ENCODE measurements at regions of chr14 and their contacts with region 1.

Region 1: GRCh38 chr14:105351920-105352851 is 37.6 kb downstream of the PACS2 start:
- DNase-seq: peak; percentile 73
- ATAC-seq: peak; percentile 94
- H3K4me3 ChIP-seq: no peak overlapping the region
- H3K27ac ChIP-seq: peak overlapping the region; percentile 29
- H3K4me1 ChIP-seq: peaks cover 8 to 12% of the 10 kb centered on the region in 2 experiments; a peak in 2 of 4 replicates
- H3K27me3 ChIP-seq: no peaks in the 10 kb centered on the region
- CTCF ChIP-seq: peak; percentile 85 to 90 (median 89)
- POLR2A ChIP-seq: no peak
- RAD21 ChIP-seq: peak; percentile 97

Region 2: DNA sequence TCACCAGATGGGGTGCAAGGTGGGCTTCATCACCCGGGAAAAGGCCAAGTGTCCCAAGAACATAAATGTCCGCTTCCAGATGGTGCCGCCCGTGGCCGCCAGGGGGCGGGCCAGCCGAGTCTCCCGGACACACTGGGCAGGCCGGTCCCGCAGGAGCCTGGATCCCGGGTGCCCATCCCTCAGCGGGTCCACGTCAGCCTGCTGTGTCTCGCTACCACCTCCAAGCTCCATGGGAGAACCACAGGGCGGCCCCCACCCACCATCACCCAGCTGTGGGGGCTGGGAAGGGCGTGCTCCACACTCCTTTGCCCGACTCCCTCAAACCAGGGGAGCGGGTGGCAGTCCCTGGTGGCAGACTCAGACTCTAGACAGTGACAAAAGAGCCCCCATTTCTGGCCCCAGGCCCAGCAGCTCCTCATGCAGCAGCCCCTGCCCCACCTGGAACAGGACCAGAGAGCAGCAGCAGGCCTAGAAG is 149.1 kb before region 1 on chr14:
- CTCF ChIA-PET with region 1: interaction called, 10 read pairs
- POLR2A ChIA-PET with region 1: no interaction called
- RAD21 ChIA-PET with region 1: no interaction called
- intact Hi-C with region 1: loop called (anchors 1 kb)
- DNase-seq: no peak
- ATAC-seq: peak; percentile 75
- H3K4me3 ChIP-seq: no peak overlapping the region
- H3K27ac ChIP-seq: no peak overlapping the region
- H3K4me1 ChIP-seq: peaks cover 25 to 38% of the 10 kb centered on the region in 2 experiments; a peak in 3 of 4 replicates
- H3K27me3 ChIP-seq: no peaks in the 10 kb centered on the region
- CTCF ChIP-seq: peak in 2 of 3 experiments; percentile 86 to 93; a peak in 4 of 6 replicates
- POLR2A ChIP-seq: no peak
- RAD21 ChIP-seq: no peak

Region 3: DNA sequence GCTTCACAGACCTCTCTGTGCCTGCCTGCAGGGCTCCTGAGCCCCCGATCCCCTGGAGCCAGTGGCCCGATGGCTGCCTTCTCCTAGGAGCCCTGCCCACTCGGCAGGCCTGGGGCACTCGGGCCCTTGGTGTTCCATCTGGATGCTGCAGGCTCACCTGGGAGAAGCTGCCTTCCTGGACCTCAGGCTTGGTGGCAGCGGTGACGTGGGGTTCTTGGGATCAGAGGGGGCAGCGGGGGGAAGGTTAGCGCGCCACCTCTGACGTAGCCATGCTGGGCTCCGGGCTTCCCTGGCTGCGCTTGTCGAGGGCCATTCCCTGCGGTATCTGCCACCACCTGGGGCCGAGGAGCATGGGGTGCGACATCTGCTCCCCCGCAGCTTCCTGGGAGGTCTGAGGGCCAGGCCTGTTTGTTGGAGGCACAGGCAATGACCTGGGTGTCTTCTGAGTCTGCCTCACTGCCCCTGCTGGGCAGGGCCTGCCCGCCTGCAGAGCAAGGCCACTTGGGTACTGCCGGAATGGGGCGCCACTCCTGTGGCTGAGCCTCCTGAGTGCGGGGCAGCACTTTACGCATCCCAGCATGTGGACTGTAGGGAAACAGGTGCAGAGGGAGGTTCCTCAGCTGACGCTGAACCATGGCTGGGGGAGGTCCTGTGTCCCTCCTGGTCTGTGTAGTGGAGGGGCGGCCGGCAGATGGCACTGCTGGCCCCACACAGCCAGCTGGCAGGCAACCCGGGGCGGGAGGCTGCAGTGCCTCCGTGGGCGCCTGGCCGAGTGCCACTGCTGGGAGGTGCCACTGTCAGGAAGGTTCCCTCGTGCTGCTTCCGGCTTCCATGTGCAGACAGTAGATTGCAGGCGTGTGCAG is 87.7 kb after region 1 on chr14:
- CTCF ChIA-PET with region 1: no interaction called
- POLR2A ChIA-PET with region 1: no interaction called
- RAD21 ChIA-PET with region 1: no interaction called
- intact Hi-C with region 1: no loop called
- DNase-seq: no peak
- ATAC-seq: 0 out of 2 replicates have a peak, but pooled peaks have one; percentile 15
- H3K4me3 ChIP-seq: no peak overlapping the region
- H3K27ac ChIP-seq: no peak overlapping the region
- H3K4me1 ChIP-seq: no peaks in the 10 kb centered on the region
- H3K27me3 ChIP-seq: no peaks in the 10 kb centered on the region
- CTCF ChIP-seq: no peak
- POLR2A ChIP-seq: no peak
- RAD21 ChIP-seq: no peak

Measured in HCT116 (cell line).